Activated T-helper 2 cell treated with anti-CD3 and anti-CD28 coated beads, Interferon-gamma antibody, Interleukin-2, Interleukin-4, amounts not matched to agents 10 μg/mL and 5 μg/mL and 100 μg/mL, durations not matched to agents 14 hours and 24 hours and 36 hours (primary cell): ENCODE measurements at regions of chr18 and their contacts with region 1.

Region 1: GRCh38 chr18:45690975-45691815 is 32.8 kb upstream of the SLC14A1 start:
- DNase-seq: peak; percentile 60
- H3K4me3 Mint-ChIP-seq: no peak overlapping the region
- H3K27ac Mint-ChIP-seq: no peak overlapping the region
- H3K4me1 Mint-ChIP-seq: peaks cover 38% of the 10 kb centered on the region
- H3K27me3 Mint-ChIP-seq: peaks cover 25% of the 10 kb centered on the region

Region 2: GRCh38 chr18:45402485-45403056 is 288.6 kb before region 1 on chr18:
- intact Hi-C with region 1: no loop called
- DNase-seq: no peak
- H3K4me3 Mint-ChIP-seq: no peak overlapping the region
- H3K27ac Mint-ChIP-seq: no peak overlapping the region
- H3K4me1 Mint-ChIP-seq: no peaks in the 10 kb centered on the region
- H3K27me3 Mint-ChIP-seq: no peaks in the 10 kb centered on the region

Region 3: DNA sequence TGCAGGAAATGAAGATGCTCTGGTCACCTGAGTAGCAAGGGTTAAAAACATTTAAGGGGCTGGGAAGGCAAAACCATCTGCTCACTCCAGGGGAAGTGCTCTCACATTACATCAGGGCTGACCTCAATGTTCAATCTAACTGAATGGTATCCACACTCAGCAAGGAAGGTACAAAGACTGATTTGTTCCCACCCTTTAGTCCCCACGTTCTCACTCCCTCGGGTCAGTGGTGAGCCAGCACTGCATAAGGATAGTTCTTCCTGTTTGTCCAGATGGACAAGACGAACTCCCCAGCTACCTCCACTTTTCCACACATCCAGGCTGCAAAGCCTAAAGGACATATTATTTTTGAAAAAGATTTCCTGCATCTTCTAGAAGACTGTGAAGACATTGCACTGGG is 202.6 kb before region 1 on chr18:
- intact Hi-C with region 1: no loop called
- DNase-seq: no peak
- H3K4me3 Mint-ChIP-seq: no peak overlapping the region
- H3K27ac Mint-ChIP-seq: no peak overlapping the region
- H3K4me1 Mint-ChIP-seq: no peaks in the 10 kb centered on the region
- H3K27me3 Mint-ChIP-seq: peaks cover 2% of the 10 kb centered on the region

Region 4: DNA sequence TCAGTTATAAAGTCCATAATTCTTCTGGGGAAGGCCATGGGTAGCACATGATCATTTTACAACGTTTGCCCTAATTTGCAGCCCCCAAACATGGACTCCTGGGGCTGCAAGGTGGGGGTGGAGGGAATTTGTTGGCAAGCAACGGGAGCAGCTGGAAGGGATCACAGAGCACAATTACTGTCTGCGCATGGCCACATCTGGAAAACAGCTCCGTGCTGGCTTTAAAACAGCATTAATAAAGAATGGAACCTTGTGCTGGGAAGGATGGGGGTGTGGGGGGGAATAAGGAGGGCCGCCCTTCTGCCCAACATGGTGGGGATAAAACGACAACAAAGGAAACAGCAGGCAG is 136.8 kb before region 1 on chr18:
- intact Hi-C with region 1: no loop called
- DNase-seq: no peak
- H3K4me3 Mint-ChIP-seq: no peak overlapping the region
- H3K27ac Mint-ChIP-seq: no peak overlapping the region
- H3K4me1 Mint-ChIP-seq: no peaks in the 10 kb centered on the region
- H3K27me3 Mint-ChIP-seq: peaks cover 5% of the 10 kb centered on the region

Region 5: DNA sequence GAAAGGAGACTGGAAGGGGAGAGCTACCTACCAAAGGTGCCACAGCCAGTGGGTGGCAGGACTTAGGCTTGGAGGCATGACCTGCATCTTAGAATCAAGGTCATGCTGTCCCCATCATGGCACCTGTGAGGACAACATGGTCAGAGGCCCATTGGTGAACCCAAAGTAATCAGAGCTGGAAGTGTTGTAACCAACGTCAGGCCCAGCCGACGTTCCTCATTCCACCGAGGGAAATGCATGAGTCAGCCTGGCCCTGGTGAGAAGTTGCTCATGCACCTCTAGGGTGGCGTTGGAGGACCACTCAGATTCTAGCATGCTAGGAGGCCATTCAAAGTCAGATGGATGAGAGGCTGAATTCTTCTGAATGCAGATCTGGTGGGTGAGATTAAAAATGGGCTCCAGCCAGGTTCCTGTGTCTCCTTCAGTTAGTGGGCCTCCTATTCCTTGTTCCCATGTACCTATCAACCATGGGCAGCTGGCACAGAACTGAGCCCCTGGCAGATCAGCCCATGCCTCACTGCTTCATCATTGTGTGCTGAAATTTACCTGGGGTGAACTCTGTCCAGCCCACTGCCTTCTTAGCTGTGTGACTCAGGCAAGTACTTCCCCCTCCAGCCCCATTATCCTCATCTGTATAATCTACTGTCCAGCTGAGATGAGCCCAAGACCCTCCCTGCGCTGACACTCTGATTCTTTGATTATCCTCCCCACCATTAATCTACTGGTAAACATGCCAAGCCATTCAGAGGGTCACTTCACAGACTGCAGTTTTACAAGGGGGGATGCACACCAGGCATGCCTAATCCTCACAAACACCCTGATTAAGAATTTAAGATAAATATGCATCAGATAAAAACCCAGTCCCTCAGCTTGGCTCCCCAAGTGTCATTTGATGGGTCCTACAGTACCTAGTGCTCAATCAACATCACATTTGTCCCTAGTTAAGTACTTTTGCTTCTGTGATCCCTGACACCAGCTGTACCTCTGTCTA is 61.9 kb before region 1 on chr18:
- intact Hi-C with region 1: no loop called
- DNase-seq: no peak
- H3K4me3 Mint-ChIP-seq: no peak overlapping the region
- H3K27ac Mint-ChIP-seq: no peak overlapping the region
- H3K4me1 Mint-ChIP-seq: peaks cover 2% of the 10 kb centered on the region
- H3K27me3 Mint-ChIP-seq: peaks cover 4% of the 10 kb centered on the region

Region 6: DNA sequence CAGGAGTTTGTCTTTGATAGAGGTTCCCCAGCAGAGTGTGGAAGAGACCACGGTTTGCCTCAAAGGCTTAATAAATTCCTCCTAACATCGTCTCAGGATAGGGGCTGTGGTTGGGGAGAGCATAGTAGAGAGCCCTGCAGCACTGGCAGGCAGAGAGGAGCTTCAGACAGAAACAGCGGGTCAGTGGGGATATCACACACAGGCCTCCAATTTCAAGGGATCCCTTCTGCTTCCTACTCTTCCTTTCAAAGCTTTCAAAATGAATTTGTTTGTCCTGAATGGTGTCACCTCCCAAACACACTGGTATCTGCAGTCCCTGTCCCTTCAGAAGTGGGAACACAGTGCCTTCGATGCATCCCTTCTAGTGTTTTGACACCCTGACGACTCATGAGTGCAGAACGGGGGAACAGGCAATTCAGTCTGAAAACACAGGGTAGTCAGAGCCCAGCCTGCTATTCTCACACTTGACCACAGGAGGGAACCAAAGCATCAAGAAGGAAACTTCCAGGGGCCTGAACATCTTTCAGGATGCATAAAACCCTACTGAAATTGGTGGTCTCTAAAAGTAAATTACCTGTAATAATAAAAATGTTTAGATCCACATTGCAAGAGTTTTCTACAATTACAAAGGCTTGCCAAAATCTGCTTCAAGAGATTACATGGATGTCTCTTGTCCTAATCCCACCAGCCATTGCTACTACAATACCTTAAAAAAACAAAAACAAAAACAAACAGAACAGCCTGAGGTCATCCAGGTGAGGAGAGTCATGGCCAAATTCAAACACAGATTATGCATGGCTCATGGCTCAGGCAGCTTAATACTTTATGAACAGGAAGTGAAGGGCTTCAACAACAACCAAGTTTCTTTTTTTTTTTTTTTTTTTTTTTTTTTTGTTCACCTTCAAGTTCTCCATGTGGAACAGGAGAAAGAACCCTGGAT is 26.1 kb before region 1 on chr18:
- intact Hi-C with region 1: loop called (anchors 1 kb)
- DNase-seq: peak; percentile 54
- H3K4me3 Mint-ChIP-seq: no peak overlapping the region
- H3K27ac Mint-ChIP-seq: peak overlapping the region; percentile 48
- H3K4me1 Mint-ChIP-seq: peaks cover 50% of the 10 kb centered on the region
- H3K27me3 Mint-ChIP-seq: peaks cover 14% of the 10 kb centered on the region

Region 7: DNA sequence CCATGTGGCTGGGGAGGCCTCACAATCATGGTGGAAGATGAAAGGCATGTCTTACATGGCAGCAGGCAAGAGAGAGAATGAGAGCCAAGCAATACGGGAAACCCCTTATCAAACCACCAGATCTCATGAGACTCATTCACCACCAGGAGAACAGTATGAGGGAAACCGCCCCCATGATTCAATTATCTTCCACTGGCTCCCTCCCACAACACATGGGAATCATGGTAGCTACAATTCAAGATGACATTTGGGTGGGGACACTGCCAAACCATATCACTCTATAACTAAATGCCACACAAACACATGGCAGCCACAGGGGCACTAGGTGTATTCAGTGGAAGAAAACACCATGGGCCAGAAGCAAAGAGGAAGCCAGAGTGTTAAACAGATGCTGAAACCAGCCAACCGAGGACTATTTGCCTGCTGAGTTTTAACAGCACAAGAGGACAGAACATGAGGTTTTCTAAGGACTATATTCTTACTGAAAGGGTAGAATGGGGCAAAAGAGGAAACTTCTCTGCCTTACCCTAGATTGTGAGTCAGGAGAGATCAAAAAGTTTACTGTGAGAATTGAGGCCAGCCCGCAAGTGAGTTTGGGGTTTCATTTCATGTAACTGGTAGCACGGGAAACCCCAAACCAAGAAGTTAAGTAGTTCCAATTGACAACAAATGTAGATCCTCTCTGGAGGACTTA is 183.4 kb after region 1 on chr18:
- intact Hi-C with region 1: loop called (anchors 1 kb)
- DNase-seq: peak; percentile 38
- H3K4me3 Mint-ChIP-seq: peak overlapping the region; percentile 6
- H3K27ac Mint-ChIP-seq: peak overlapping the region; percentile 89
- H3K4me1 Mint-ChIP-seq: peaks cover 24% of the 10 kb centered on the region
- H3K27me3 Mint-ChIP-seq: no peaks in the 10 kb centered on the region

Region 8: DNA sequence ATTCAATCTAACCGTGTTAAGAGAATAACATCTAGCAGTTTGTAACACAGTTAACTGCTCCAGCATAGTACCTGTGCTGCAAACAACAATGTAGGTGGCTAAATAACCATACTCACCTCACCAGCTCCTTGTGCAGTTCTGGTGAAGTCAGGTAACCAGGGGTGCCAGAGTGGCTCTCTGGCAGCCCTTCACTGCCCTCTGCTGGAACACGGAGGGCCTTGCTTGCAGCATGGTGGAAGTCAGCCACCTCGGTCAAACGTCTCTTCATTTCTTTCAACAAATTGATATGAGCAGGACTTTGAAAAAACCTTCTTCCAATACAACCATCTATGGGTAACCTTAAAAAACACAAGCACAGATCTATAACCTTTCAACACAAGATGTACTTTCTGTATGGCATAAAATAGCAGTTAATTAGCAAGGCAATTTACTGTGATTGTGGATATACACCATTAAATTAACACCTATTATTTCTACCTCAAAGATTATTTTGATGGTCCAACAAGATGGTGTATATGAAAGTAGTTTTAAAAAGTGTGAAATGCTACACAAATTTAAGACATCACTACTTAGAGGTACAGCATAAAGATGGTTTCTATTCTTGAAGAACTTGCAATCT is 219.3 kb after region 1 on chr18:
- intact Hi-C with region 1: loop called (anchors 1 kb)
- DNase-seq: peak; percentile 27
- H3K4me3 Mint-ChIP-seq: no peak overlapping the region
- H3K27ac Mint-ChIP-seq: no peak overlapping the region
- H3K4me1 Mint-ChIP-seq: no peaks in the 10 kb centered on the region
- H3K27me3 Mint-ChIP-seq: no peaks in the 10 kb centered on the region

Region 9: DNA sequence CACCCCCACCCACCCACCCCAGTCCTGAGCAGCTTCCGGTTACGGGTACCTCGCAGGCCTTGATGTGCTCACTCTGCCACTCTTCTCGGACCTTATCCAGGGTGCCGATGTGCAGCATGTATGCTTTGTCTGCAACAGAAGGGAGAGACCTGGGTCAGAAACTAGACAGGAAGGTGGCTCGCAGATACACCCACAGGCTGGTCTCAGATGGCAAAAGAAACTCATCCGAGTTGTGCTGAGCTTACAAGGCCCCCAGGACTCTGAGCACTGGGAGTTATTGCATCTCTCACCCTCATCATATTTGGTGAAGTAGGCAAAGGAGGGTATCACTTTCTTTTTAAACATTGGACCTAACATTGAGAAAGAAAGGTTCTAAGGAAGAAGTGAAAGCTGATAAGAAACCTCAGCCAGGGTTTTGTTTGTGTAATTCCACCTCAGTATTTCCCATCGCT is 306.5 kb after region 1 on chr18:
- intact Hi-C with region 1: loop called (anchors 2 kb)
- DNase-seq: peak; percentile 27
- H3K4me3 Mint-ChIP-seq: peak overlapping the region; percentile 28
- H3K27ac Mint-ChIP-seq: peak overlapping the region; percentile 85
- H3K4me1 Mint-ChIP-seq: peaks cover 41% of the 10 kb centered on the region
- H3K27me3 Mint-ChIP-seq: no peaks in the 10 kb centered on the region